GM12878 (cell line): ENCODE measurements at regions of chr11 and their contacts with region 1.

Region 1: GRCh38 chr11:6557761-6558674 is 45.4 kb downstream of the RRP8 start:
- DNase-seq: no peak
- ATAC-seq: no peak
- H3K4me3 ChIP-seq: no peak overlapping the region
- H3K27ac ChIP-seq: no peak overlapping the region
- H3K4me1 ChIP-seq: no peaks in the 10 kb centered on the region
- H3K27me3 ChIP-seq: no peaks in the 10 kb centered on the region
- CTCF ChIP-seq: no peak
- EP300 ChIP-seq: no peak
- POLR2A ChIP-seq: no peak
- RAD21 ChIP-seq: no peak

Region 2: DNA sequence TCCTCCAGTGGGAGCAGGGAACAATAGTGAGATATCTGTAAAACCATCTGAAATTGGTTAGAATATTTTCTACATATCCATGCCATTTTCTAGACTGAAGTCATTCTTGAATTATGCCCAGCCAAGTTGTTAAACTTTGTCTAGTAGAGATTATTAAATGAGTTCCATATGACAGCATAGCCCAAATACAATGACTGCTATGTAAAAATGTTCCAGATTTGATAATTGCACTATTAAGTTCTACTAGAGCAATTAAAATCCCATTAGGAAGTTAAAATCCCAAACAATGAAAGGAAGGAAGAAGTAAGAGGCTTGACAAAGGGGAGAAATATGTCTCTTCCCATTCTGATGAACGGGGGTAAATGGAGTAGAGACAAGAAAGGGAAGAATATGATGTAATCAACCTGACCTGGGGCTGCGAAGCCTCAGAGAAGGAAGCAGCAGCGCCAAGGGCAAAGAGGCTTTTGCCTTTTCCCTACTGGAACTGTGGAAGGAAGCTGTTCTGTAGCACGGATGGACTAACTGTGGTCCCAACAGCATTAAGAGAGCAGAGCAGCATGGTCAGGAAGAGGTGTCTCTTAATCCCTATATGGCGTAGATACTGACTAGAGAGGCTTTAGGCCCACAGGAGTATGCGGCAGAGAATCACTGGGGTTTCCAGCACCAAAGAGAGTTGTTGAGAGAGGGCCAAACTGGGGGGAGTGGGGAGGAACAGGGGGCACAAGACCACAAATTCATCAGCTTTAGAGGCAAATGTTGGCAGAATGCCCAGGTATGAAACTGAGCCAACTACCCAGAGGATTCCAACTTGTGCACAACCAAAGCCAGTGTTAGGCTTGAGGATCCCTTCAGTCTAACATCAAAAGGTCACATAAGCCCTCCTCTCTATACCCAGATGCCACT is 18.7 kb after region 1 on chr11:
- CTCF ChIA-PET with region 1: no interaction called
- POLR2A ChIA-PET with region 1: no interaction called
- RAD21 ChIA-PET with region 1: no interaction called
- SMC1A ChIA-PET with region 1: no interaction called
- in situ Hi-C with region 1: no loop called
- intact Hi-C with region 1: loop called (anchors 1 kb)
- DNase-seq: no peak
- ATAC-seq: no peak
- H3K4me3 ChIP-seq: no peak overlapping the region
- H3K27ac ChIP-seq: no peak overlapping the region
- H3K4me1 ChIP-seq: no peaks in the 10 kb centered on the region
- H3K27me3 ChIP-seq: no peaks in the 10 kb centered on the region
- CTCF ChIP-seq: no peak
- EP300 ChIP-seq: no peak
- POLR2A ChIP-seq: no peak
- RAD21 ChIP-seq: no peak

Region 3: GRCh38 chr11:6602096-6602940 is 44.3 kb after region 1 on chr11:
- CTCF ChIA-PET with region 1: no interaction called
- POLR2A ChIA-PET with region 1: no interaction called
- RAD21 ChIA-PET with region 1: no interaction called
- SMC1A ChIA-PET with region 1: no interaction called
- in situ Hi-C with region 1: no loop called
- intact Hi-C with region 1: no loop called
- DNase-seq: no peak
- ATAC-seq: no peak
- H3K4me3 ChIP-seq: peak overlapping the region; percentile 96
- H3K27ac ChIP-seq: peak overlapping the region; percentile 85
- H3K4me1 ChIP-seq: peaks cover 17% of the 10 kb centered on the region
- H3K27me3 ChIP-seq: no peaks in the 10 kb centered on the region
- CTCF ChIP-seq: no peak
- EP300 ChIP-seq: no peak
- POLR2A ChIP-seq: no peak
- RAD21 ChIP-seq: no peak